ENCODE measurements at regions of chr11 and their contacts with region 1.

Region 1: DNA sequence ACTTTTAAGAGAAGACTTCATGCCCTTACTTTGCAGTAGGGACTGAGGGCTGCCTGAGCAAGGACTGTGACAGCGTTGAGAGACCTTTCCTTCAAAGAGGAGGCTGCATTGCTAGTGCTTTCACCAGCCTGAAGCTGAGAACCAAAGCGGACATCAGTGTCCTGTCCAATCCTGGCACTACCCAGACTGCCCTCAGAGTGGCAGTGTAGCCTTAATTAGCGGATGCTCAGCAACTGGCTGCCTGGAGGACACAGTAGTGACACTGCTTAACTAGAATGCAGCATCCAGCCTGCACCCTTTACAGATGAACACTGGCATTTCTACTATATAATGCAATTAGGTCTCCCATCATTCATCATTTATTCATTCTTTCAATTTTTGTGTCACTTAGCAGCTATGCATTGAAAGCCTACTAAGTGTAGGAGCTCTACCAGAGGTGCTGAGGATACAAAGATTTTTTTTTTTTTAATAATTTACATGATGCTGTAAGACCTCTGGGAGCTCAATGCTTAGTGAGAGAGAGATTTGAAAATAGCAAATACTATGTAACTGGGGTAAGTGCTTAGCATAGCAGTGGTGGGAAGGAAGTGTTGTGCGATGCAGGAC is 36.9 kb upstream of the SLC36A4 start:
- DNase-seq: peak; percentile 49 to 85
- H3K4me3 ChIP-seq: no peak overlapping the region
- H3K27ac ChIP-seq: no peak overlapping the region
- H3K4me1 ChIP-seq: peaks cover 0 to 4% (median 2%) of the 10 kb centered on the region in 4 experiments; a peak in 4 of 7 replicates
- H3K27me3 ChIP-seq: no peaks in the 10 kb centered on the region
- CTCF ChIP-seq: peak; percentile 96 to 99 (median 98)
- EP300 ChIP-seq: no peak
- POLR2A ChIP-seq: no peak
- RAD21 ChIP-seq: peak; percentile 99

Region 2: GRCh38 chr11:92528001-92528400 is 706.7 kb before region 1 on chr11:
- CTCF ChIA-PET with region 1: no interaction called
- POLR2A ChIA-PET with region 1: no interaction called
- DNase-seq: no peak
- H3K4me3 ChIP-seq: no peak overlapping the region
- H3K27ac ChIP-seq: no peak overlapping the region
- H3K4me1 ChIP-seq: peaks cover 0 to 11% (median 4%) of the 10 kb centered on the region in 4 experiments; a peak in 2 of 7 replicates
- H3K27me3 ChIP-seq: no peaks in the 10 kb centered on the region
- CTCF ChIP-seq: no peak
- EP300 ChIP-seq: no peak
- POLR2A ChIP-seq: no peak
- RAD21 ChIP-seq: no peak

Region 3: GRCh38 chr11:93248602-93249001 is 13.9 kb after region 1 on chr11:
- CTCF ChIA-PET with region 1: interaction called, 11 read pairs
- POLR2A ChIA-PET with region 1: no interaction called
- DNase-seq: no peak
- H3K4me3 ChIP-seq: no peak overlapping the region
- H3K27ac ChIP-seq: no peak overlapping the region
- H3K4me1 ChIP-seq: no peaks in the 10 kb centered on the region
- H3K27me3 ChIP-seq: peaks cover 0 to 1% (median 0%) of the 10 kb centered on the region in 4 experiments; a peak in 1 of 7 replicates
- CTCF ChIP-seq: peak in 1 of 3 experiments; percentile 4; a peak in 1 of 4 replicates
- EP300 ChIP-seq: no peak
- POLR2A ChIP-seq: no peak
- RAD21 ChIP-seq: peak in 1 of 2 experiments; percentile 18; a peak in 2 of 4 replicates

Region 4: DNA sequence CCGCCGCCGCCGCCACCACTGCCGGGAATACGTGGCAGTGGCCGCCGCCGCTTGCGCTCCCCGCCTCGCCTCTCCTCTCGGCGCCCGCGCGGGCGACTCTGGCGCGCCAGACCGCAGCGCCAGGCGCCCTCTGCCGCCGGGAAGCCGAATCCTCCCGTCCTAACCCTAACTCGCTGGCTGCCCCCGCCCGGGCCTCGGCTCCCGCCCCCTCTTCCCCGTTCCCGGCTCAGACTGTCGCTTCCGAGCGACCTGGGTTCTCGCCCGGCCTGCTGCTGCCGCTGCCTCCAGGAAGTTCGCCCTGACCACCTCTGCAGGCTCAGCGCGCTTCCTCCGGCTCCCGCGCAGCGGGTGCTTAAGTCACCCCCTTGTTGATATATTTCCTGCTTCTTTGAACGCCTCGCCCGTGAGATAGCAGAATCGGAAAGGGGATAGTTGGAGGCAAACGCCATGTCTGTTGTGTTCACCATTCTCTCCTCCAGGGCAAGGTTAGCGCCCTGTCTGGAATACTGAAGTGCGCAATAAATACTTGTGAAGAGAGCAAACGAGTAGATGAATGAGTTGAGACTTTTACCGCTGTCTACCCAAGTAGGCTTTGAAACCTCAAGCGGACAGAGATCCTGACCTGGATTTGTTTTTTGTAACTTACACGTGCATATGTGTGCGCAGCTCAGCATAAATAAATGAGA is 308.7 kb after region 1 on chr11 and contains the start of gene SMCO4:
- CTCF ChIA-PET with region 1: interaction called, 16 read pairs
- POLR2A ChIA-PET with region 1: interaction called, 4 read pairs
- DNase-seq: peak; percentile 74 to 91
- H3K4me3 ChIP-seq: peak within 1 kb of the TSS; percentile 58 to 84 (median 70)
- H3K27ac ChIP-seq: peak within 1 kb of the TSS; percentile 5; the same call in 1 of the 2 replicates
- H3K4me1 ChIP-seq: peaks cover 3 to 15% (median 11%) of the 10 kb centered on the region in 4 experiments; a peak in 5 of 7 replicates
- H3K27me3 ChIP-seq: no peaks in the 10 kb centered on the region
- CTCF ChIP-seq: peak; percentile 71 to 91 (median 81)
- EP300 ChIP-seq: peak in 1 of 2 experiments; percentile 73; a peak in 1 of 3 replicates
- POLR2A ChIP-seq: peak in 1 of 2 experiments; percentile 34; a peak in 2 of 3 replicates
- RAD21 ChIP-seq: peak; percentile 85 to 90
- total RNA-seq, gene SMCO4: 53.9 and 57.0 TPM in 2 replicates

Region 5: DNA sequence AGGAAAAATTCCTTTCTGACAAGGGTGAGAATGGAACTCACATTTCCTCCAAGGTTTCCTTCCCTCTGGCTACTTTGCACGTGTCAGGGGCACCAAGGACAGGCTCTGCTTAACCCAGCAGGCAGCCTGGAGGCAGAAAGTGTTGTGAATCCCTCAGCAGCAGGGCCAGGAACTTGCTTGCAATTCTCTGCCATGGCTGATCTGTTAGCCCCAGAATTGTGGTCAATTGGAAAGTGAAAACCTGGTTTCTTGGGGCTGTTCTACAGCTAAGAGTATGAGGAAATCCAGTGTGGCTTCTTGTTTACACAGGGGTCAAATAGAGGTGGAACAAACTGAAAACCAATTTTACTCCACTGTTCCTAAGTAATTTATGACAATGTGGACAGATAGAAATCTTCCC is 388.5 kb after region 1 on chr11:
- CTCF ChIA-PET with region 1: interaction called, 55 read pairs
- POLR2A ChIA-PET with region 1: no interaction called
- DNase-seq: peak; percentile 10 to 51
- H3K4me3 ChIP-seq: no peak overlapping the region
- H3K27ac ChIP-seq: no peak overlapping the region
- H3K4me1 ChIP-seq: peaks cover 0 to 5% (median 1%) of the 10 kb centered on the region in 4 experiments; a peak in 5 of 7 replicates
- H3K27me3 ChIP-seq: no peaks in the 10 kb centered on the region
- CTCF ChIP-seq: no peak
- EP300 ChIP-seq: no peak
- POLR2A ChIP-seq: no peak
- RAD21 ChIP-seq: no peak

Region 6: GRCh38 chr11:93686226-93686625 is 451.5 kb after region 1 on chr11:
- CTCF ChIA-PET with region 1: interaction called, 10 read pairs
- POLR2A ChIA-PET with region 1: no interaction called
- DNase-seq: no peak
- H3K4me3 ChIP-seq: no peak overlapping the region
- H3K27ac ChIP-seq: no peak overlapping the region
- H3K4me1 ChIP-seq: no peaks in the 10 kb centered on the region
- H3K27me3 ChIP-seq: no peaks in the 10 kb centered on the region
- CTCF ChIP-seq: no peak
- EP300 ChIP-seq: no peak
- POLR2A ChIP-seq: no peak
- RAD21 ChIP-seq: no peak

Measured in H1 (cell line).